Sigmoid colon (tissue), 7 donors: ENCODE measurements at regions of chr3 and their contacts with region 1.

Region 1: DNA sequence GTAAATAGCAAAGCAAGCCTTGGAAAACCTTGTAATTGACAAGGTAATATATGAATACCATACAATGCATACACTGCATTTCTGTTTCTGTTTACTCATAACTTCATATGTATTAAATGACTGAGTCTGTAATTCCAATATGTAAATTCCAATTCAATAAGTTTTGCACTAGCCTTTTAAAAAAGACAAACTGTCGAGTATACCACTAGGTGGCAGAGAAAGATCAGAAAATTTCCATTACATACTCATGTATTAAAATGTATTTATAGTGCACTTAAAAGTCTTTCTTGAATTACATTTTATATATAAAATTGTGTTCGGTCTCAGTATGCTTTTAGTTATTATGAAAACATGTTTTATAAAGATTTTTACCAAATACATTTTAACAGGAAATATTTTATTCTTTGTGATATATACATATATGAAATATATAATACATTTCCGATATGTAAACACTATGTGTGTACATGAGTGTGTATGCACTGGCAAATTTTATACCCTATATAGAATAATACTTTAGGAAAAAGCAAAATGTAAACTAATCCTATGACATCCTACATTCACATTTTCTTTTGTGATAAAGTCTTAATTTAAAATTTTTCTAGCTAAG is 216.8 kb downstream of the VGLL3 start:
- DNase-seq: no peak
- H3K4me3 ChIP-seq: no peak overlapping the region
- H3K27ac ChIP-seq: no peak overlapping the region
- H3K4me1 ChIP-seq: no peaks in the 10 kb centered on the region
- H3K27me3 ChIP-seq: no peaks in the 10 kb centered on the region
- CTCF ChIP-seq: peak in 3 of 4 experiments; percentile 48 to 64 (median 50)
- EP300 ChIP-seq: no peak
- POLR2A ChIP-seq: no peak

Region 2: GRCh38 chr3:86948840-86949239 is 174.7 kb after region 1 on chr3:
- intact Hi-C with region 1: no loop called
- DNase-seq: no peak
- H3K4me3 ChIP-seq: no peak overlapping the region
- H3K27ac ChIP-seq: no peak overlapping the region
- H3K4me1 ChIP-seq: peaks cover 0 to 10% (median 2%) of the 10 kb centered on the region in 4 donors
- H3K27me3 ChIP-seq: no peaks in the 10 kb centered on the region
- CTCF ChIP-seq: no peak
- EP300 ChIP-seq: no peak
- POLR2A ChIP-seq: no peak

Region 3: DNA sequence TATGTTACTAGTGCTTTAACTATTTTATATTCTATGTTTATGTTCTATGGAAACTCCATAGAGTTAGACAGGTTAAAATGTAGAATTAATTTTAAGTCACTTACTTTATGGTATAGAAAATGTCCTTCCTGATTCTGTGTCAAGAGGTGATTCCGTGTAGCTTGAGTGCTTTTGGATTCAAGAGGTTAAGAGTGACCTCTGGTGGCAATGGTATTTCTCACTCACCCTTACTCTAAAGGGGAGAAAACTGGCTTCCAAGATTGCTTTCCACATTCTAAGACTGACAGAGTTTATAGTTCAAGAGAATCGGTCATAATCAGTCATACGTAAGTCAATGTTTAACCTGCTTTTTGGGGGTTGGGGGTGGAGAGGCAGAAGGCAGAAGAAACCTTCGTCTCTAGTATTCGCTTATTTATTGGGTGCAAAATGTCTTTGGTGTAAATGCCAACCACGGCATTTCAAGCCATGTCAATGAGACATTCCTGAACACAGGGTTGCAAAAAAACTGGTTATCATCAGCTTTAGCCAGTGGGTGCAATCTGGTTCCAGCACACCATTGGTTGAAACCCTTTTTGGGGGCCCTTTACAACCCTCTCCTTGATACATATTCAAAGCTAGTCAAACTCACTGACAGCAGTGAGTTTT is 308.7 kb after region 1 on chr3:
- intact Hi-C with region 1: loop called (anchors 1 kb)
- DNase-seq: no peak
- H3K4me3 ChIP-seq: no peak overlapping the region
- H3K27ac ChIP-seq: no peak overlapping the region
- H3K4me1 ChIP-seq: no peaks in the 10 kb centered on the region
- H3K27me3 ChIP-seq: no peaks in the 10 kb centered on the region
- CTCF ChIP-seq: peak; percentile 47 to 62 (median 52)
- EP300 ChIP-seq: no peak
- POLR2A ChIP-seq: no peak

Region 4: DNA sequence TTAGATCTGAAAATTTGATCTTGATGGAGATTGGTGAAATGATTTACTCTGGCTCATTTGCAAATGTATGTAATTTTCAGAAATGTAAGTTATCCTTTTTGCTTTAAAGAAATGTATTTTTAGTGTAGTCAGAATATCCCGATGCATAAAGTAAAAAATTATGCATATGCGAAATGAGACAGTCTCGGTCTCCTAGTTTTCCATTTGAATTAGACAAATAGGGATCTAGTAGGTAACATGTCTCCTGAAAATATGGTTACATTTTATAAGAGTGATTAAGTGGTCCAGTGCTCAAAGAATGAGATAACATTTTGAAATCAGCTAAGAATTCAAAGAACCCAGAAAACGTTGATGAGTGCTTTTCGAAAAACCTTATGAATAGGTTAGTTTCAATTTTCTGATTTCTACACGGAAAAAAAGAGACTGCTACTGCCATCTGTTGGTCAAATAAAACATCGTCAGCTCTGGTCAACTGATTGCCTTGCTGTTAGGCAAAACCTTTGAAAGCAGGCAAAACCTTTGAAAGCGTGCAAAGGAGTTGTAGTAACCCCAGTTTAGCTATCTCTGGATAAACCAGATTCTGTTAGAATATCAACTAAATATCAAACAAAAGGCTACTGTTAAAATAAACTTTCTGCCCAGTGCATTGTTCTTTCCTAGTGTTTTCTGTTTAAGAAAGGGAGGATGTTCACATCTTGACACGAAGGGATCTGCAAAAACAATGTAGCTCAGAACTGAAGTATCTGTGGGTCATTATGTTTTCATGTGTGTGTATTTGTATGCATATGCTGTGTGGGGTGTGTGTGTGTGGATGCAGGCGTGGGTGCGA is 393.7 kb after region 1 on chr3:
- intact Hi-C with region 1: loop called (anchors 2 kb)
- DNase-seq: no peak
- H3K4me3 ChIP-seq: peak overlapping the region in 3 of 4 donors; percentile 10 to 43 (median 36)
- H3K27ac ChIP-seq: no peak overlapping the region
- H3K4me1 ChIP-seq: peaks cover 0 to 3% (median 0%) of the 10 kb centered on the region in 4 donors
- H3K27me3 ChIP-seq: no peaks in the 10 kb centered on the region
- CTCF ChIP-seq: peak in 3 of 4 experiments; percentile 37 to 70 (median 40)
- EP300 ChIP-seq: no peak
- POLR2A ChIP-seq: no peak